Vagina (tissue), 2 donors: ENCODE measurements at regions of chr14 and their contacts with region 1.

Region 1: GRCh38 chr14:91388551-91388975 is 29.1 kb downstream of the CCDC88C start:
- DNase-seq: no peak
- H3K4me3 ChIP-seq: no peak overlapping the region
- H3K27ac ChIP-seq: no peak overlapping the region
- H3K4me1 ChIP-seq: peaks cover 34% of the 10 kb centered on the region
- H3K27me3 ChIP-seq: no peaks in the 10 kb centered on the region
- CTCF ChIP-seq: no peak
- POLR2A ChIP-seq: no peak

Region 2: DNA sequence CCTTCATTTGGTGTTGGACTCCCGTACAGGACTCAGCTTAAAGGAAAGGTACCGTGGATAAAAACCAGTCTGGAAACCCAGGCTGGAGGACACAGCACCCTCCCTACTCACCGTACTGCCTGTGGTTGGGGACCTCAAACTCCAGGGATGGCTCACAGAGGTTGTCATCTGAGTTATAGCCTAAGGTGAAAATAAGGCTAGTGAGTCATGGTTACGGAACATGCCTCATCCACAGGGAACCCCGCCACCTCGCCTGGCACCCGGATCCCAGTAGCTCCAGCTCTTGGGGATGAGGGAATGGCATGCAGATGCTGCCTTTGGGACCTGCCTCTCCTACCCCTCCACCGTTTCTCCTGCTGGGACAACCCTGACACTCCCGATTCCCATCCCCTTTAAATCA is 107.2 kb before region 1 on chr14:
- intact Hi-C with region 1: no loop called
- DNase-seq: no peak
- H3K4me3 ChIP-seq: no peak overlapping the region
- H3K27ac ChIP-seq: no peak overlapping the region
- H3K4me1 ChIP-seq: peaks cover 25% of the 10 kb centered on the region
- H3K27me3 ChIP-seq: no peaks in the 10 kb centered on the region
- CTCF ChIP-seq: no peak
- POLR2A ChIP-seq: no peak

Region 3: DNA sequence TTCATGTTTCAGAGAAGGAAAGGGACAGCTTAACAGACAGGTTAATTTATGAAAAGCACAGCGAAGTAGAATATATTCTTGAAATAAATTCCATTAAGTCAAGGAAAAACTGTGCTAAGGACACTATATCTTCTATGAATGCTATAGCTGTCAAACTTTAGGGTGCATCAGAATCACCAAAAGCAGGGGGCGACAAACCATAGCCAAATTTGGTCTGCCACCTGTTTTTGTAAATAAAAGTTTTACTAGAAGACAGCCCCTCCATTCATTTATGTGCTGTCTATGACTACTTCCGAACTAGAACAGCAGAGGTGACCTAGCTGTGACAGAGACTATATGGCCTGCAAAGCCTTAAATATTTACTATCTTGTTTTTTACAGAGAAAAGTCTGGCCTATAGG is 95.6 kb after region 1 on chr14:
- intact Hi-C with region 1: no loop called
- DNase-seq: no peak
- H3K4me3 ChIP-seq: no peak overlapping the region
- H3K27ac ChIP-seq: no peak overlapping the region
- H3K4me1 ChIP-seq: peaks cover 34% of the 10 kb centered on the region
- H3K27me3 ChIP-seq: no peaks in the 10 kb centered on the region
- CTCF ChIP-seq: no peak
- POLR2A ChIP-seq: no peak

Region 4: GRCh38 chr14:93346929-93347721 is 1958.6 kb after region 1 on chr14 and contains the start of gene COX8C:
- intact Hi-C with region 1: loop called (anchors 10 kb)
- DNase-seq: no peak
- H3K4me3 ChIP-seq: no peak within 1 kb of the TSS
- H3K27ac ChIP-seq: no peak within 1 kb of the TSS
- H3K4me1 ChIP-seq: no peaks in the 10 kb centered on the region
- H3K27me3 ChIP-seq: no peaks in the 10 kb centered on the region
- CTCF ChIP-seq: no peak
- POLR2A ChIP-seq: no peak
- total RNA-seq, gene COX8C: not detected